Common myeloid progenitor, CD34-positive (primary cell): ENCODE measurements at regions of chr10 and their contacts with region 1.

Region 1: DNA sequence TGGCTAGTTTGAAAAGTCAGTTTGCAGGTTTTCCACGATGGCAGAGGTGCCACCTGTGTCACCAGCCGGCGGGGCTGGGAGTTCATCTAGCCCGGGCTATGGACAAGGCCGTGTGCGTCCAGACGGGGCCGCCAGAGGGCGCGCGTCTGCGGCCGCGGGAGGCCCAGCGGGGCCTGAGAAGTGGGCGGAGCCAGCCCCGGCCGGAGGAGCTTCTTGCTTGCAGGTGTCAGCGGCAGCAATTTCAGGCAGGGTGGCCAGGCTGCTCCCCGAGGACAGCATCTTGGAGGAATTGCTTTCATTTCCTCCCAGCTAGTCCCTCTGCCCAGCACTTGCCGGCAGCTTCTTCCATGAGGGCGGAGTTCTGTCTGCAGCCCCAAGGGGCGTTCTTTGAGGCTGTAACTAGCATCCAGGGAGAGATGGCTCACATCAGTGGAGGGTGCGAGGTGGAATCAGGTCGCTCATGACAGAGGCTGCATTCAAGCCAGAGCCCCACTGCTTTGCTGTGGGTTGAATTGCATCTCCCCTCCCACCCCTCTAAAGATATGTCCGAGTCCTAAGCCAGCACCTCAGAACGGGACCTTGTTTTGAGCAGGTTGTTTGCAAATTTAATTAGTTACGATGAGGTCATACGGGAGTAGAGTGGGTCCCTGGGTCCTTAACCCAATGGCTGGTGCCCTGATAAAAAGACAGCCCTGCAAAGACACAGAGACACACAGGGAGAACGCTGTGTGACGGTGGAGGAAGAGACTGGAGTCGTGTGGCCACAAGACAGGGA is 85.9 kb upstream of the MKI67 start:
- DNase-seq: peak; percentile 85 to 87 (median 87)
- H3K4me3 ChIP-seq: peak overlapping the region; percentile 29 to 73 (median 48)
- H3K27ac ChIP-seq: no peak overlapping the region
- H3K4me1 ChIP-seq: peaks cover 0 to 13% (median 10%) of the 10 kb centered on the region in 4 experiments
- H3K27me3 ChIP-seq: peaks cover 0 to 11% (median 6%) of the 10 kb centered on the region in 5 experiments

Region 2: DNA sequence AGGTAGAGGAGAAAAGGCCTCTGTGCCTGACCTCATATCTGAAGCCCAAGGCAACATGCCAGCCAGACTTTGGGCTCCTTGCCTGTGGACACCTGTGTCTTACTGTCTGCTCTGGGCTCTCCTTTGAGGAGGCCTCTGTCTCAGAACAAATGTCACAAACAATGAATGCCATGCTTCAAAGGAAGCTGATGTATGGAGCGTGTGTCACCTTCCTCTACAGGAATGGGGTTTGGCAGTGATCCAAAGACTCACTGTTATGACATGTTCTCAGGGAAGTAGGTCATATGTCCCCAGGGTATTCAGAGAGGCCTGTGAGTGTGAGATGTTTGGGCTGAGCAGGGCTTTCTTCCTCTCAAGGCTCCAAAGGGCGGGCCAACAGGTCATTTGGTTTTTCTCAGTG is 266.8 kb before region 1 on chr10:
- CTCF ChIA-PET with region 1: no interaction called
- POLR2A ChIA-PET with region 1: no interaction called
- DNase-seq: peak; percentile 59 to 83 (median 81)
- H3K4me3 ChIP-seq: no peak overlapping the region
- H3K27ac ChIP-seq: no peak overlapping the region
- H3K4me1 ChIP-seq: peaks cover 11 to 27% (median 21%) of the 10 kb centered on the region in 4 experiments
- H3K27me3 ChIP-seq: no peaks in the 10 kb centered on the region

Region 3: DNA sequence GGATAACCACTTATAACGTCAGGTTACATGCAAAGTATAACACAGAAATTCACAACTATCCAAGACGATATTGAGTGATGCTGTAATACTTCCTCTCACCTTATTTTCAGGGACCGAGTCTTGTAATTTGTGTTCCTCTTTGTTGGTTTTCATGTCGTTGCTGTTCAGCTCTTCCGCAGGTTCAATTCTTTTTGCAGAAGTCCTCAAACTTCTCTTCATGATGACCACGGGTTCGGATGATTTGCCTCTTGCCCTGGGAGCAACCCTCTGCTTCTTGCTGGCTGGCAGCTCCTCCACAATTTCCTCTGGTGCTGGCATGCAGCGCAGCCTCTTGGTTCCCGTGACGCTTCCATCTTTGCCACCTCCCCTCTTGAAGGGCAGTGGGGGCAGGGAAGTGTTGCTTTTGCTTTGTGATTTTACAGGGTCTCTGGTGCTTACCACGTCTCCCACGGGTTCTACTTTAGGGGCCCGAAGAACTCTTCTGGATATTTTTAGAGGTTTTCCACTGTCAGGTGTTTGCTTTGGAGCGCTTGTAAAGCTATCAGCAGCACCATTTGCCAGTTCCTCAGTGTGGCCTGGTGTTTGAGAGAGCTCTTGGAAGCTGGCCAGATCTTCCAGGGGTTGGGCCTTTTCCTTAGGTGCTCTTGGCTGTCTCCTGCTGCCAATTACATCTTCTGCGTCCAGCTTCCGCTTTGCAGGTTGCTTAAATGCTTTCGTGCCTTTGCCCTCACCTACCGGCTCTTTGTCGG is 109.5 kb before region 1 on chr10:
- CTCF ChIA-PET with region 1: no interaction called
- POLR2A ChIA-PET with region 1: no interaction called
- DNase-seq: no peak
- H3K4me3 ChIP-seq: no peak overlapping the region
- H3K27ac ChIP-seq: no peak overlapping the region
- H3K4me1 ChIP-seq: no peaks in the 10 kb centered on the region
- H3K27me3 ChIP-seq: no peaks in the 10 kb centered on the region

Region 4: DNA sequence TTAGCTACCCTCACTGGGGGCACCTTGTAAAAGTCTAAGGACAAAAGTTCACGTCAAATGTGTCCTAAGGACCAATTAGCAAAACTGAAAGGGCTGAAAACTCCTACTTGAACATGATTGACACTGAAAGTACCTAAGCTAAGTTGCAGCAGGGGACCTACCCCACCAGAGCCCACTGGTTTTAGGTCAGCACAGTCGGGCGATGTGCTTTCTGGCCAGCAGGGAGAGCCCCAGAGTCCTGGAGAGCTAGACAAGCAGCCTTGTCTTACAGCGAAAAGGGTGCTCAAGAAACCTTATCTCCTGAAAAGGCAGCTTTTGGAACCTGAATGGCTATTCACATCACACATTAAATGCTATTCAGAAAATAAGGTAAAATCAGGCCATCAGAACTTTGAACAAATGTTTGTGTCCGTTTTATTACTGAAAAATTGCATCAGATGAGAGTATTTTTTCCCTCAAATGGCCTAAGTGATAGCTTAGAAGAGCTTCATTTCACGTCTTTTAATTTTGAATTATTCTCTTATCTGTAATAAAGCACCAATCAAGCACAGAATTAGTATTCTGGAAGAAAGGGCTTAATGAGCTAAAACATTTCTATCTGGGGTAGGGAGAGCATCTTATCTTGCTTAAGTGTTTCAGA is 33.7 kb before region 1 on chr10:
- CTCF ChIA-PET with region 1: interaction called, 30 read pairs
- POLR2A ChIA-PET with region 1: no interaction called
- DNase-seq: peak; percentile 54 to 77 (median 76)
- H3K4me3 ChIP-seq: no peak overlapping the region
- H3K27ac ChIP-seq: no peak overlapping the region
- H3K4me1 ChIP-seq: peaks cover 2 to 16% (median 13%) of the 10 kb centered on the region in 4 experiments
- H3K27me3 ChIP-seq: peaks cover 0 to 4% (median 0%) of the 10 kb centered on the region in 5 experiments

Region 5: GRCh38 chr10:128186959-128187787 is 25.0 kb before region 1 on chr10:
- CTCF ChIA-PET with region 1: interaction called, 12 read pairs
- POLR2A ChIA-PET with region 1: no interaction called
- DNase-seq: no peak
- H3K4me3 ChIP-seq: no peak overlapping the region
- H3K27ac ChIP-seq: no peak overlapping the region
- H3K4me1 ChIP-seq: no peaks in the 10 kb centered on the region
- H3K27me3 ChIP-seq: peaks cover 0 to 11% (median 2%) of the 10 kb centered on the region in 5 experiments

Region 6: DNA sequence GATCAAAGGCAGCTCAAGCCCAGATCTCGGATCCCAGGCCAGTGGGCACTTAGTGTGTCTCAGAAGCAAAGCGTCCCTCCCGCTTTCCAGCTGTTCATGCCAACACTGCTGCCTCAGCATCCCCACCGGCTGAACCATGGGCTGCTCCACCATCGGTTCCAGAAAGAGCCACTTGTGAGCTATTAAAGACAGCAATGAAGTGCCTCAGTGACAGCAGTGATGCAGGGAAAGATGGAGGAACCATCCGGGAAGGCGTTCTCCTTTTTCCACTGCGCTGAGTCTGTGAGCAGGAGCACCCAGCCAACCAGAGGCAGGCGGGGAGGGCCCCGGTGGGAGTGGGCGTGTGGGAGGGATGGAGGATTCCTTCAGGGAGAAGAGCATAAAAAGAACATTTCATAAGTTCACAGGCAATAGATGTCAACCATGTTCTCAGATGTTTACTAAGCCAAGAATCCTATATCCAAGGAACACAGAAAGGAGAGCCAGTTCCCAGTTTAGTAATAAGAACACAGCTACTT is 10.3 kb after region 1 on chr10:
- CTCF ChIA-PET with region 1: interaction called, 12 read pairs
- POLR2A ChIA-PET with region 1: no interaction called
- DNase-seq: no peak
- H3K4me3 ChIP-seq: no peak overlapping the region
- H3K27ac ChIP-seq: no peak overlapping the region
- H3K4me1 ChIP-seq: peaks cover 3 to 25% (median 9%) of the 10 kb centered on the region in 4 experiments
- H3K27me3 ChIP-seq: no peaks in the 10 kb centered on the region

Region 7: GRCh38 chr10:128237710-128238109 is 25.6 kb after region 1 on chr10:
- CTCF ChIA-PET with region 1: no interaction called
- POLR2A ChIA-PET with region 1: no interaction called
- DNase-seq: no peak
- H3K4me3 ChIP-seq: no peak overlapping the region
- H3K27ac ChIP-seq: no peak overlapping the region
- H3K4me1 ChIP-seq: no peaks in the 10 kb centered on the region
- H3K27me3 ChIP-seq: peaks cover 0 to 11% (median 8%) of the 10 kb centered on the region in 5 experiments

Region 8: DNA sequence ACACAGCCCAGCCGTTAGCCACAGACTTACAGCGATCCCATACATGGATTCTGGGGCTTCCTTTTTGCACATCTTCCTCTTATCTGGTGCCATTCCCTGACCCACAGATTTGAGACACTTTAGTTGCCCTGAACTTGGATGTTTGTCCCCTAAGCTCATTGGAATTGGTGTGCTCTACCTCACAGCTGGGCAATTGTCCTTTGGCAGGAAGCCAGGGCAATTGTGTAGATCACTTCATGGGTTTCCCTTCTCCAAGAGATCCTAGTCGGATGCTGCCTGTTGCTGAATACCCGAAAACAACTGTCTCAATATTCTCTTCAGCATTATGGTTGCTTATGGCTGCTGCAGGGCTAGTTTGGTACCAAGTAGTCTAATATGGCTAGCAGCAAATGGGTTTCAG is 384.8 kb after region 1 on chr10:
- CTCF ChIA-PET with region 1: no interaction called
- POLR2A ChIA-PET with region 1: no interaction called
- DNase-seq: no peak
- H3K4me3 ChIP-seq: no peak overlapping the region
- H3K27ac ChIP-seq: no peak overlapping the region
- H3K4me1 ChIP-seq: no peaks in the 10 kb centered on the region
- H3K27me3 ChIP-seq: peaks cover 0 to 7% (median 2%) of the 10 kb centered on the region in 5 experiments